ENCODE measurements at regions of chr12 and their contacts with region 1.

Region 1: GRCh38 chr12:61939977-61940376 is 320.2 kb upstream of the USP15 start:
- DNase-seq: no peak
- ATAC-seq: no peak
- H3K4me3 ChIP-seq: no peak overlapping the region
- H3K27ac ChIP-seq: no peak overlapping the region
- H3K4me1 ChIP-seq: no peaks in the 10 kb centered on the region
- H3K27me3 ChIP-seq: no peaks in the 10 kb centered on the region
- CTCF ChIP-seq: no peak
- POLR2A ChIP-seq: no peak
- RAD21 ChIP-seq: no peak

Region 2: GRCh38 chr12:61452076-61452475 is 487.9 kb before region 1 on chr12:
- CTCF ChIA-PET with region 1: no interaction called
- POLR2A ChIA-PET with region 1: no interaction called
- RAD21 ChIA-PET with region 1: no interaction called
- intact Hi-C with region 1: no loop called
- DNase-seq: peak; percentile 67
- ATAC-seq: peak; percentile 60
- H3K4me3 ChIP-seq: no peak overlapping the region
- H3K27ac ChIP-seq: no peak overlapping the region
- H3K4me1 ChIP-seq: peaks cover 0 to 6% of the 10 kb centered on the region in 2 experiments; a peak in 2 of 4 replicates
- H3K27me3 ChIP-seq: no peaks in the 10 kb centered on the region
- CTCF ChIP-seq: no peak
- POLR2A ChIP-seq: no peak
- RAD21 ChIP-seq: 0 out of 2 replicates have a peak, but pooled peaks have one; percentile 9

Region 3: DNA sequence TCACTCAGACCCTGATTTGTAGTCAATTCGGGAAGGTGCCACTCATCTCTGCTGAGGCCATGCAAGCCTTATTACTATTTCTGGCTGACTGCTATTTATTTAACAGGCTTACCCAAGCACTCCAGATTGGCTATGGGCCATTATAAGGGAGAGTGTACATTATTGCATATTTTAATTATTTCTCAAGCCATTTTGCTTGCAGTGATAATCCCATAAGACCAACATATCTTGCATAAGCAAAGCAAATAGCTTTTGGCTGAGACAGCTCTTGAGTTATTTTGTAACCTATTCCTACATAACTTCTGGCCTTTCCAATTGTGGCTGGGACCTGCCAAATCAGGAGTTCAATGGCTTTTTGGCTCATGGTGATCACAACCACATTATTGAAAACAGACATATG is 189.4 kb before region 1 on chr12:
- CTCF ChIA-PET with region 1: no interaction called
- POLR2A ChIA-PET with region 1: no interaction called
- RAD21 ChIA-PET with region 1: no interaction called
- intact Hi-C with region 1: loop called (anchors 5 kb)
- DNase-seq: no peak
- ATAC-seq: no peak
- H3K4me3 ChIP-seq: no peak overlapping the region
- H3K27ac ChIP-seq: no peak overlapping the region
- H3K4me1 ChIP-seq: no peaks in the 10 kb centered on the region
- H3K27me3 ChIP-seq: no peaks in the 10 kb centered on the region
- CTCF ChIP-seq: no peak
- POLR2A ChIP-seq: no peak
- RAD21 ChIP-seq: no peak